Common myeloid progenitor, CD34-positive (primary cell): ENCODE measurements at regions of chrX and their contacts with region 1.

Region 1: DNA sequence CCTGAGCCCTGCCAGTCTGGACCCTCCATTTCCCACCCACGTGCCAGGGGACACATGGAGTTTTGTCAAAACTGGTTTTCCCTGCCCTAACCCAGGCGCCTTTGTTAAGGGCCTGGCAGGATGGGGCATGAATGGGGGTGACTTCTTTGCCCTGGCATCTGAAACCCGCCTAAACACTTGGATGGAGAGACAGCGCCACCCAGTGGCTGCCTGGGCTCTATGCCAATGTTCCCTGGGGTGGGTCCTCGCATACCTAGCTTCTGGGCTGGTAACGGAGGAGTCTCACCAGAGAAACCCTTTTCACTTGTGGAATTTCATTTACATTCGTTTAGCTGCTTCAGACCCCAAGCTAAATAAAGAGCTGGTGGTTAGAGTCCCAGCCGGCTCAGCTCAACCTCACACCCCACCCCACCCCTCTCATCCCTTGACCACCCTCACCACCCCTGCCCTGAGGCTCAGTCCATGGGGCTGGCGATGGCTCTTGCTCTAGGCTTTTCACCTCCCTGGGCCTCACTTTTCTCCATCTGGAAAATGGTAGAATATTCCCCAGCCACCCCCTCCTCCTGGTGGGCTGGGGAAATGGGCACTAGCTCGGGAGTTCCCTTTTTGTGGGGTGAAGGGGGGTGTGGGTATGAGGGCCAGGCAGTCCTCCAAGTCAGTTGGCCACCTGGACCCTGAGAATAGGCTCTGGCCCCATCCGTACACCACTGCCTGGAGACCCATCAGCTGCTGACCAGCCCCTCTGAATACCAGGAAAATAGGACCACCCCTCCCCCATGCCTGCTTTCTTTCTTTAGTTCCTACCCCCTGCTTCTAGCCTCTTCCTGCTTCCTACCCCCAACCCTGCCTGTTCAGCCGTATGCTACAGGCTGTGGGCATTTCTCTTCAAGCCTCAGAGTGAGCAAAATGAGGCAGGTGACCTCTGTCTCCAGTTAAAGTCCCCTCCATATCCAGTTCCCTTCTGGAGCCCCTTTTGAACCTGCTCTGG is 57.1 kb upstream of the PJA1 start:
- DNase-seq: peak; percentile 69 to 86 (median 80)
- H3K4me3 ChIP-seq: no peak overlapping the region
- H3K27ac ChIP-seq: no peak overlapping the region
- H3K4me1 ChIP-seq: peaks cover 0 to 13% (median 6%) of the 10 kb centered on the region in 4 experiments
- H3K27me3 ChIP-seq: peaks cover 0 to 17% (median 0%) of the 10 kb centered on the region in 5 experiments

Region 2: DNA sequence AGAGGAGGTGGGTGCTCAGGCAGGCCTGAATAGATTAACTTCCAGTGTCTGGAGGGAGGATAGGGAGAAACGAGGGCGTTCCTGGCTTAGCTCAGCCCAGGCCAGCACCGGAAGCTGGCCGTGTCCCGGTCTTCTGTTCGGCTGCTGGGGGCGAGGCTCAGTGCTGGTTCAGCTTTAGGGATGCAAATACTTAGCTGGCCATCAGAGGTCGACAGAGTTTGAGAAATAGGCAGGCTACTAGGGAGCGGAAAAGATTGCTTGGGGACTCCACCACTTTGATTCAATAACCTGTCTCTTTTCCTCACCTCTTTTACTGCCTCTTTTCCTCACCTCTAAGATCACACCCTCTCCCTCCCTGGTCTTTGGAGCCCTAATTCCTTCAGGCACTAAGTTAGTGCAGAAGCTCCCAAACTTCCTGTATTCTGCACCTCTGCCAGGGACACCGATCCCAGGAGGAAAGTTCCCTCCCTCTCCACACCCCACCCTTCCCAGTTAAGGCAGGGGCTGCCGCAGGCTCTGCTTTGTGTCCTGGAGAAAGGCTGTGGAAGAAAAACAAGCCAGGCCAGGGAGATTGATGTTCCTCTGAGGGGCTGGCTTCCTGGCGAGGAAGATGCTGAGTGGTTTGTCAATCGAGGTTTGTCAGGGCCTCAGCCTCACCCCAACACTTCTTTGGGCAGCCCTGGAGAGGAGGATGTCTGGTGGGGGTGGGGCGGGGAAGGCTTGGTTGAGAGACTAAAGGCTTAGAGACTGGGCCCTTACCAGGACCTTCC is 399.6 kb before region 1 on chrX:
- CTCF ChIA-PET with region 1: interaction called, 48 read pairs
- POLR2A ChIA-PET with region 1: no interaction called
- DNase-seq: peak in 2 of 3 donors; percentile 42 to 56
- H3K4me3 ChIP-seq: no peak overlapping the region
- H3K27ac ChIP-seq: no peak overlapping the region
- H3K4me1 ChIP-seq: peaks cover 0 to under 1% (median under 1%) of the 10 kb centered on the region in 4 experiments
- H3K27me3 ChIP-seq: peaks cover 0 to 29% (median 2%) of the 10 kb centered on the region in 5 experiments